Panc1 (cell line): ENCODE measurements at regions of chr2 and their contacts with region 1.

Region 1: GRCh38 chr2:155318710-155319109 is 620.2 kb downstream of the KCNJ3 start:
- DNase-seq: no peak
- ATAC-seq: no peak
- H3K4me3 ChIP-seq: no peak overlapping the region
- H3K27ac ChIP-seq: no peak overlapping the region
- H3K4me1 ChIP-seq: no peaks in the 10 kb centered on the region
- H3K27me3 ChIP-seq: no peaks in the 10 kb centered on the region
- CTCF ChIP-seq: no peak

Region 2: DNA sequence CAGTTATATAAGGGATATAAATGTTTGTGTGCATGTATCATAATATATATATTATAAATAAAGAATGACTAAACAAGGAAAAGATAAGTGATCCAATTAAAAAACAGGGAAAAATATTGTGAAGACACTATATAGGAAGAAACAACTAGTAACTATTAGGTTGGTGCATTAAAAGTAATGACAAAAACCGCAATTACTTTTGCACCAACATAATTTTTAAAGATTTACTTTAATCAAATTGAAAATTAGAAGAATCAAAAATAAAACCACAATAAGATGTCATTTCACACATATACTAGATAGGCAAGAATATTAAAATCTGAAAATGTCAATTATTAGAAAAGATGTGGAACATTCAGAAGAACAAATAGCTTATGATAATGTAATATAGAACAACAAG is 24.4 kb before region 1 on chr2:
- CTCF ChIA-PET with region 1: no interaction called
- POLR2A ChIA-PET with region 1: no interaction called
- in situ Hi-C with region 1: no loop called
- intact Hi-C with region 1: loop called (anchors 1 kb)
- DNase-seq: no peak
- ATAC-seq: no peak
- H3K4me3 ChIP-seq: no peak overlapping the region
- H3K27ac ChIP-seq: no peak overlapping the region
- H3K4me1 ChIP-seq: no peaks in the 10 kb centered on the region
- H3K27me3 ChIP-seq: no peaks in the 10 kb centered on the region
- CTCF ChIP-seq: no peak